ENCODE measurements at regions of chr19 and their contacts with region 1.

Region 1: GRCh38 chr19:51439021-51439465 is 19.2 kb downstream of the SIGLEC8 start:
- DNase-seq: peak; percentile 18
- H3K4me3 ChIP-seq: no peak overlapping the region
- H3K27ac ChIP-seq: no peak overlapping the region
- H3K4me1 ChIP-seq: no peaks in the 10 kb centered on the region
- H3K27me3 ChIP-seq: no peaks in the 10 kb centered on the region
- CTCF ChIP-seq: peak in 1 of 2 donors; percentile 50

Region 2: GRCh38 chr19:51422053-51422448 is 17.0 kb before region 1 on chr19:
- CTCF ChIA-PET with region 1: no interaction called
- dilution Hi-C with region 1: no loop called
- in situ Hi-C with region 1: no loop called
- intact Hi-C with region 1: loop called (anchors 1 kb)
- DNase-seq: peak; percentile 63
- H3K4me3 ChIP-seq: no peak overlapping the region
- H3K27ac ChIP-seq: no peak overlapping the region
- H3K4me1 ChIP-seq: no peaks in the 10 kb centered on the region
- H3K27me3 ChIP-seq: peaks cover 2% of the 10 kb centered on the region
- CTCF ChIP-seq: peak; percentile 87 to 99

Measured in mammary epithelial cell (primary cell).